Left cardiac atrium (tissue), 4 donors: ENCODE measurements at regions of chr12 and their contacts with region 1.

Region 1: GRCh38 chr12:122895705-122896636 is at the start of gene VPS37B:
- DNase-seq: peak; percentile 87
- ATAC-seq: peak; percentile 84 to 89
- total RNA-seq, gene VPS37B: 20.5 to 22.7 TPM

Region 2: GRCh38 chr12:122836027-122836921 is 59.7 kb before region 1 on chr12:
- intact Hi-C with region 1: loop called in 1 of 2 experiments (anchors 2 kb)
- DNase-seq: no peak
- ATAC-seq: peak; percentile 3 to 25